Thyroid gland (tissue), 4 donors: ENCODE measurements at regions of chr3 and their contacts with region 1.

Region 1: DNA sequence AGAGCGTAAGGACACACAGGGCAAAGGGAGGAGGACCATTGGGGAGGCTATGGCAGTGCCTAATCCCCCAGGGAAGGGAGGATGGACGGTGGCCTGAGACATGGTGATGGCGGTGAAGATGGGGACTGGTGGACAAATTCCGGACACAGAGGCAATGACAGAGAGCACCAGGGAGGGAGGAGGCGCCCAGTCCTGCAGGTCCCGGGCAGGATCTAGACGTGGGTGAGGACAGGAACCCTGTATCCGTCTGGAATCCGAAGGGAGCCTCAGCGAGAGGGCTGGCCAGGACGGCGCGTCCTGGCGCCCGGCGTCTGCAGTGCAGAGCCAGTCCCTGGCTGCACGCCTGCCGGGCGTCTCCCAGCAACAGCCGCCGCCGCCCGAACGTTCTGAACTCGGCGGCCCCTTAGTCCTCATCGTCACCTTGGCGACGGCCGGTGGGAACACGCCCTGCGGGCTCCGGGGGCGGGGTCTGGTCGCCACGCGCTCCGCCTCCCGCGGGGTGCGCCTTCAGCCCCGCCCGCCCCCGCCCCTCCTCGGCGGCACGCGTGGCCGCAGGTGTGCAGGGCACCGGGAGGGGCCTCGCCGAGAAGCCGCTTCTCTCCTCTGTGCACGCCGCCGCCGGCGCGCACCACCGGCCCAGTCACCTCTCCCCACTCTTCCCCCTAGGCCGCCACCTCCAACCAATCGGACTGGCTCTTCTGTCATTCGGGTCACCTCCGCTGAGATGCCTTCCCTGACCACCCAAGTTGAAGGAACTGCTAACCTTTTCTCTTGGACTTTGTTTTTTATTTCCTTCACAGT is 11.6 kb downstream of the XIRP1 start:
- DNase-seq: peak; percentile 98
- H3K4me3 ChIP-seq: peak overlapping the region in 1 of 3 donors; percentile 9
- H3K27ac ChIP-seq: peak overlapping the region; percentile 83 to 96 (median 91)
- H3K4me1 ChIP-seq: peaks cover 37 to 58% of the 10 kb centered on the region in 2 donors
- H3K27me3 ChIP-seq: no peaks in the 10 kb centered on the region
- CTCF ChIP-seq: peak in 4 of 6 experiments; percentile 35 to 47 (median 44)
- POLR2A ChIP-seq: peak in 1 of 2 donors; percentile 85

Region 2: GRCh38 chr3:39141171-39141995 is 39.4 kb before region 1 on chr3:
- intact Hi-C with region 1: loop called (anchors 5 kb)
- DNase-seq: peak; percentile 95 to 96
- H3K4me3 ChIP-seq: no peak overlapping the region
- H3K27ac ChIP-seq: peak overlapping the region; percentile 89 to 94 (median 92)
- H3K4me1 ChIP-seq: peaks cover 45 to 58% of the 10 kb centered on the region in 2 donors
- H3K27me3 ChIP-seq: no peaks in the 10 kb centered on the region
- CTCF ChIP-seq: no peak
- POLR2A ChIP-seq: peak in 1 of 2 donors; percentile 21

Region 3: DNA sequence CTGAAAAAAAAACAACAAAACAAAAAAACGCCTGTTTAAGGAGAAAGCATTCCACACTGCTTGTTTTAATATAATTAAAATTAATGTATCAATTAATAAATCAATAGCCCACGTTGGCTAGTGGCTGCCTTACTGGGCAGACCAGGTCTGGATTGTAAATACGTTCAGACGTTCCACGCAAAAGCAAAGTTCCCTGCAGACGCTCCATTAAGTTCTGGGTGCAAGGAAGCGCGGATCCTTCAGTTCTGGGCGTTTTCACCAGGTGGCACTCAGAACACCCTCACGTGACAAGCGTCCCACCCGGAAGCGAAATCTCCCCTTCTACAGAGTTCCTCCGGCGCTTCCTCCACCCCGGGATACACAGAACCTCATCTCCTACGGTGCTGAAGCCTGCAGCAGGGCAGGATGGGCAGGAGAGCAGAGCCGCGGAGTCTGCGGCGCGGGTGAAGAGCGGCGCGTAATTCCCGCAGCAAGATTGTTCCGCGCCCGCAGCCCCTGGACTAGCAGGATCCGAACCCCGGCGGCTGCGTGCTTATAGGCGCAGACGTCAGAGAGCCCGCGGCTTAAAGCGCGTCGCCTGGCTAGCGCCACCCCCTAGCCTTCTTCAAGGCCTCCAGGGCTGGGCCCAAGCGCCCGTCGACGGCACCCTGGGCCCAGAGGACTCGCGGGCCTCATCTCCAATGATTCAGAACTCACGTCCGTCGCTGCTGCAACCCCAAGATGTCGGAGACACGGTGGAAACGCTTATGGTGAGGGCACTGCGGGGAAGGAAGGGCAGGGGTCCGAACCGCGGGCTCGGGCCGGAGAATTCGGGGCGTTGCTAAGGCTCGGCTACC is 202.5 kb after region 1 on chr3 and contains the start of gene SLC25A38:
- intact Hi-C with region 1: loop called (anchors 10 kb)
- DNase-seq: peak; percentile 82 to 84
- H3K4me3 ChIP-seq: peak within 1 kb of the TSS; percentile 49 to 74 (median 73)
- H3K27ac ChIP-seq: peak within 1 kb of the TSS; percentile 91
- H3K4me1 ChIP-seq: peaks cover 22 to 28% of the 10 kb centered on the region in 2 donors
- H3K27me3 ChIP-seq: no peaks in the 10 kb centered on the region
- CTCF ChIP-seq: peak in 3 of 6 experiments; percentile 27 to 32 (median 29)
- POLR2A ChIP-seq: peak in 1 of 2 donors; percentile 66
- total RNA-seq, gene SLC25A38: 45.6 to 71.6 (median 54.9) TPM

Region 4: GRCh38 chr3:39644176-39644575 is 463.4 kb after region 1 on chr3:
- intact Hi-C with region 1: no loop called
- DNase-seq: no peak
- H3K4me3 ChIP-seq: no peak overlapping the region
- H3K27ac ChIP-seq: no peak overlapping the region
- H3K4me1 ChIP-seq: no peaks in the 10 kb centered on the region
- H3K27me3 ChIP-seq: no peaks in the 10 kb centered on the region
- CTCF ChIP-seq: no peak
- POLR2A ChIP-seq: no peak